ENCODE measurements at regions of chr12 and their contacts with region 1.

Region 1: GRCh38 chr12:118055144-118055557 is 5.8 kb downstream of the WSB2 start:
- DNase-seq: peak; percentile 63
- ATAC-seq: no peak

Region 2: DNA sequence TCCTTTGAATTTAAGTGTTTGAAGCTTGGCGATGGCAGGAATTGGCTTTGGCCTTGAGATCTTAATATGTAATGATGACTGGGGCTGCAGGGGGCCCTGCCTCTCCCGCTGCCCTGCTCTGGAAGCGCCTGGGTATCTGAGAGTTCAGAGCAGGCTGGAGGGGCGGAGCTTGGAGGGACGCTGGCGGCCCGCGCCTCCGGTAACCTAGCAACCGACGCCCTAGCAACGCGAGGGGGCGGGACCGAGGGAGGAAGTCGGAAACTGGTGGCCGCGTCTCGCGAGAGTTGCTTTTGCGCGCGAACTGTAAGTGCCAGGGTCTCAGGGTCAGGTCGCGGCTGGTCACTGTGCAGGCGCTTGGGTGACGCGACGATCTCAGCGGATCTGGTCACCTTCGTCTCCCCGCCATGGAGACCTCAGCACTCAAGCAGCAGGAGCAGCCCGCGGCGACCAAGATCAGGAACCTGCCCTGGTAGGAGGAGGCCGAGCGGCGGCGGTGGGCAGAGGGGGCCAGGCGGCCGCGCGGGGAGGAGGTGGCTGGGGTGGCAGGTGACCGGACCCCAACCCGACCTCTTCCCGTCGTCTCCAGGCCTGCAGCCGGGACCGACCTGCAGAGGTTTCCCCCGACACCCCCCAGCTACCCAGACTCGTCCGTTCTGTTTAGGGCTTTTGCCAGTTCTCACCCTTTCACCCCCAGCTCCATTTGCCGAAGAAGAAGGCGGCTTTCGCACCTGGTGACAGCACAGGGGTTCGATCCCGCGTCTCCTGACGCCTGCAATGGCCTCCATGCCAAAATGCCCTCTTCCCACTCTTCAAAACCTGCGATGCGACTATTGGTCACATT is 38.5 kb before region 1 on chr12 and contains the start of gene RFC5:
- intact Hi-C with region 1: loop called (anchors 5 kb)
- DNase-seq: peak; percentile 99
- ATAC-seq: peak; percentile 99
- total RNA-seq, gene RFC5: 4.4 TPM

Measured in Right ventricle myocardium inferior (tissue), 1 donor.